Activated CD8-positive, alpha-beta T cell treated with anti-CD3 and anti-CD28 coated beads, Interleukin-2, amount 10 ng/mL, durations not matched to agents 7 days and 5 days (primary cell): ENCODE measurements at regions of chr11 and their contacts with region 1.

Region 1: GRCh38 chr11:6377902-6378639 is 12.2 kb upstream of the SMPD1 start:
- DNase-seq: peak; percentile 53
- ATAC-seq: peak; percentile 84
- H3K4me3 Mint-ChIP-seq: peak overlapping the region; percentile 55
- H3K27ac Mint-ChIP-seq: peak overlapping the region; percentile 91
- H3K4me1 Mint-ChIP-seq: peaks cover 39% of the 10 kb centered on the region
- H3K27me3 Mint-ChIP-seq: no peaks in the 10 kb centered on the region

Region 2: DNA sequence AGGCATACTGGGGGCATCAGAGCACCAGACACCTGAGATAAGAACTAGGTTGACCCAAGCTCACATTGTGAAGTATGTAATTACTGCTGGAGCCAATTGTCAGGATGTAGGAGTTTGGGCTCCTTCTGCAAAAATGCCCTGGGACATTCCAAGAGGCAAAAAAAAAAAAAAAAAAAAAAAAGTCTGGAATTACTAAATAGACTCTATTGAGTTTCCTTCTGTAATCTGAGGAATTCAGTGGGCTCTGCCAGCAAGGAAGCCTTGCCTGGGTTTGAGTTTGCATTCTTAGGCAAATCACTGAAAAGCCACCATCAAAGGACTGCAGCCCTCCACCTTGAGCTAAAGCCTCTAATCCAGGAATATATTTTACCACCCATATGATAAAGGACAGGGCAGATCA is 49.8 kb before region 1 on chr11:
- CTCF ChIA-PET with region 1: no interaction called
- POLR2A ChIA-PET with region 1: no interaction called
- DNase-seq: no peak
- ATAC-seq: no peak
- H3K4me3 Mint-ChIP-seq: no peak overlapping the region
- H3K27ac Mint-ChIP-seq: no peak overlapping the region
- H3K4me1 Mint-ChIP-seq: no peaks in the 10 kb centered on the region
- H3K27me3 Mint-ChIP-seq: peaks cover 21% of the 10 kb centered on the region

Region 3: DNA sequence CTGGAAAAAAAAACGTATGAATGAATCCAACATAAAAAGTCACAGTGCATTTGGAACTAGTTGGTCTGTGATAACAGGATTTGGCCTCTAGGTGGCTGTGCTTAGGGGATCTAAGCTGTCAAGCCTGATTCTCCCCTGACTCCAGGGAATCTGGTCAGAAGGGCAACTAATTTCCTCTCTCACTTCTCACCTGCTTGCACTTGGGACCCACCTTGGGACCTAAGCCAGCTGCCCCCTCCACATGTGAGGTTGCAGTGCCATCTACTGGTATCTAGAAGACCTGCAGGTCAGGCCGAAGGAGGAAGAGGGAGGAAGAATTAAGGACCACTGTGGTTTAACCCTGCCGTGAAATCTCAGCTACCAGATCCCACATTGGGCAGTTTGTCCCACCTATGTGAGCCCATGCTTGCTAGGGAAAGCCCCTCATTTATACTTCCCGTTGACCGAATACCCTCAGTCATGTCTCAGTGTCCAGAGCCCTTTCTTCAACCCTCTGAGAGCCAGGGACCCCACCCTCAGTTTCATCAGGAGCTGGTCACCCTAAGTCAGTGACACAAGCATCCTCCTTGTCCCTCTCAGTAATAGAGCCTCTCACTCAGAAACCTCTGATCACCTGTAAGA is 24.6 kb before region 1 on chr11:
- CTCF ChIA-PET with region 1: interaction called, 18 read pairs
- POLR2A ChIA-PET with region 1: no interaction called
- DNase-seq: peak; percentile 66
- ATAC-seq: peak; percentile 91
- H3K4me3 Mint-ChIP-seq: no peak overlapping the region
- H3K27ac Mint-ChIP-seq: no peak overlapping the region
- H3K4me1 Mint-ChIP-seq: peaks cover 2% of the 10 kb centered on the region
- H3K27me3 Mint-ChIP-seq: peaks cover 9% of the 10 kb centered on the region

Region 4: GRCh38 chr11:6419009-6419631 is 41.0 kb after region 1 on chr11 and contains the start of gene APBB1:
- CTCF ChIA-PET with region 1: interaction called, 24 read pairs
- POLR2A ChIA-PET with region 1: interaction called, 8 read pairs
- DNase-seq: peak; percentile 72
- ATAC-seq: peak; percentile 73
- H3K4me3 Mint-ChIP-seq: peak within 1 kb of the TSS; percentile 75
- H3K27ac Mint-ChIP-seq: peak within 1 kb of the TSS; percentile 30
- H3K4me1 Mint-ChIP-seq: peaks cover 5% of the 10 kb centered on the region
- H3K27me3 Mint-ChIP-seq: peaks cover 25% of the 10 kb centered on the region
- total RNA-seq, gene APBB1: 51.7 to 52.4 TPM

Region 5: GRCh38 chr11:6473481-6474422 is 95.7 kb after region 1 on chr11 and contains the start of gene TRIM3:
- CTCF ChIA-PET with region 1: interaction called, 29 read pairs
- POLR2A ChIA-PET with region 1: no interaction called
- DNase-seq: peak; percentile 67
- ATAC-seq: peak; percentile 82
- H3K4me3 Mint-ChIP-seq: peak within 1 kb of the TSS; percentile 79
- H3K27ac Mint-ChIP-seq: peak within 1 kb of the TSS; percentile 43
- H3K4me1 Mint-ChIP-seq: peaks cover 26% of the 10 kb centered on the region
- H3K27me3 Mint-ChIP-seq: peaks cover 11% of the 10 kb centered on the region
- total RNA-seq, gene TRIM3: 5.7 to 7.5 TPM

Region 6: DNA sequence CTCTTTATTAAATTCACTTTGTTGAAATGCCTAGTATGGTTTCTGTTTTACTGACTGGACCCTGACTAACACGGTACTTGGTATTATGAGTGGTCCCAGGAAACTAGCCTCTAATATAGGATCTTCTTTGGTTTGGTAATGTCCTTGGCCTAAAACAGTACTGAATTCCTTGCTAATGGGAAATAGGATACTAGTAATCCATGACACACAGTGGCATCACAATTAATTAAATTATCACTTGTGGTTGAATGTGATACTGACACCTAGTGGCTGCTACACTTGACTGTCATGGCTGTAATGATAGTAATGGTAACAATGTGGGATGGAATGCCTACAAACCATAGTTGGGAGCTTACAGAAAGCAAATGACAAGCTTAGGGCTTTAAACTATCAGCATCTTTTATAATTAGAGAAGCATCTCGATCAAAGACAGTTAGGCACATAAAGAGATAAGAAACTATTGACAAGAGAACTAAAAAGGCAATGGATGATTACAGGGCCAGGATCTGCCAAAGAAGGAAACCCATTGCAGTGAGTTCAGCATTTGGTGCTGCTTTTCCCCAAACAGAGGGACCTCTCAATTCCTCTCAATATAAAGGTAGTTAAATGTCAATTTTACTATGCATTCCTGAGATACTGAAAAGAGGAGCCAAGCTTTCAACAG is 127.6 kb after region 1 on chr11:
- CTCF ChIA-PET with region 1: interaction called, 126 read pairs
- POLR2A ChIA-PET with region 1: no interaction called
- DNase-seq: peak; percentile 41
- ATAC-seq: peak; percentile 72
- H3K4me3 Mint-ChIP-seq: no peak overlapping the region
- H3K27ac Mint-ChIP-seq: no peak overlapping the region
- H3K4me1 Mint-ChIP-seq: peaks cover 7% of the 10 kb centered on the region
- H3K27me3 Mint-ChIP-seq: no peaks in the 10 kb centered on the region

Region 7: DNA sequence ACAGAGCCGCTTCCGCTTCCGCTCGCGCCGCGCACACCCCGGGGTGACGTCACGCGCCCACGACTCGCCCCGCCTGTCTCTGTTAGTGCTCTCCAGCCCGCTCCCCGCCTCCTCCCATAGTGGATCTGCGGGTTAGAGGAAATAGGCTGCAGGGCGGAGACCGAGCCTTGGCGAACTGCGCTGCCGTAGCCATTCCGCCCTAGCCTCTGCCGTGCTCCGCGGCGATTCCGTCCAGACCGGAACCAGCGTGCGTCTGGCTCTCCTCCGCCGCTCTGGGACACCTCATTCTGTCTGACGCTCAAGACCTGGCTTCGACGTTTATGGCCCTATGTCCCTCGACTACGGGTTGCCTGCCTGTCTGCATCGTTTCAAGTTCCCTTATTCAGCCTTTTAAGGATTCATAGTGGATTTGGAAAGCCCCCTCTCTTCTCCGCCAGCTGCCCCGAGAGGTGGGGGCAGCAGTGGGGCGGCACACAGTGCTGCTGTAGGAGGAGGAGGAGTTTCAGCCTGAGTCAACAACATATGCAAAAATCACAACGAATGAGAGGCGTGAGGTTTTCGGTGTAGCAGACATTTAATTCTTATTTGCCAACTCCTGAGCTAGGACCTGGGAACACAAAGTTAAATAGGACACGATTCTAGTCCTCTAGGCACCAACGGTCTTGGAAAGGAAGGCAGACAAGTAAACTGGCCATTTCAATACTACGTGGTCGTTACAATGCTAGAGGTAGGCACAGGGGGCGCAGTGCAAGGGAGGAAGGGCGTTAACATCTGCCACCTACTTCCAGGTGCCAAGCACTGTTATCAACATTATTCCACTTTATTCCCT is 234.4 kb after region 1 on chr11 and contains the start of gene TAF10:
- CTCF ChIA-PET with region 1: interaction called, 14 read pairs
- POLR2A ChIA-PET with region 1: no interaction called
- DNase-seq: peak; percentile 98
- ATAC-seq: peak; percentile 95
- H3K4me3 Mint-ChIP-seq: peak within 1 kb of the TSS; percentile 89
- H3K27ac Mint-ChIP-seq: peak within 1 kb of the TSS; percentile 92
- H3K4me1 Mint-ChIP-seq: peaks cover 42% of the 10 kb centered on the region
- H3K27me3 Mint-ChIP-seq: no peaks in the 10 kb centered on the region
- total RNA-seq, gene TAF10: 140 to 156 TPM

Region 8: DNA sequence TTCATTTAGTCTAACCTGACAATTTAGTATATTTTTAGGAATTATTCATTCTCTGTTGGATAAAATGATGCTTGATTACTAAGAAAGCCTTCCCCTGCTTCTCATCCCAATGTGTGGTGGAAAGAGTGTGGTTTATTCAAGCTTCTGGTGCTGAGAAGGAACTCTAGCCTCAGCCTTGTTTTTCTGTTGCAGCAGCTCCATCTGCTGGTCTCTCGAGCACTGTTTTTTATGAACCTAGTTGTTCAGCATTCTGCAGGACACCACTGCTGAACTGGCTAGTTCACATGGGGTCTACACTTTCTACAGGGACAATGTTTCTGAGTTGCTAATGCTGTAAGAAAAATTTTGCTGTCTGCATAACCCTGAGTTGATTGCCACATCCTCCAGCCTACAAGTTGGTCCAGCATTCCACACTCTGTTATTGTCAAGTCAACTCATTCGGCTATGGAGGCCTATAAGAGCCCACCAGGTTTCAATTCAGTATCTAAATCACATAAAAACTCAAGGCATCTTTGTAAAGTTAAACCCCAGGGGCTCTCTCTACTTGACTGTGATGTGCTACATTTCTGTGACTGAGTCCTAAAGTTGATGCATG is 379.4 kb after region 1 on chr11:
- CTCF ChIA-PET with region 1: interaction called, 24 read pairs
- POLR2A ChIA-PET with region 1: no interaction called
- DNase-seq: peak; percentile 76
- ATAC-seq: peak; percentile 90
- H3K4me3 Mint-ChIP-seq: no peak overlapping the region
- H3K27ac Mint-ChIP-seq: no peak overlapping the region
- H3K4me1 Mint-ChIP-seq: no peaks in the 10 kb centered on the region
- H3K27me3 Mint-ChIP-seq: peaks cover 2% of the 10 kb centered on the region